Activated CD4-positive, alpha-beta T cell treated with anti-CD3 and anti-CD28 coated beads for 36 hours (primary cell): ENCODE measurements at regions of chr14 and their contacts with region 1.

Region 1: GRCh38 chr14:101947906-101948665 is 16.3 kb upstream of the DYNC1H1 start:
- DNase-seq: peak; percentile 100
- ATAC-seq: peak; percentile 98
- H3K4me3 Mint-ChIP-seq: peak overlapping the region; percentile 89
- H3K27ac Mint-ChIP-seq: peak overlapping the region; percentile 93
- H3K4me1 Mint-ChIP-seq: peaks cover 12% of the 10 kb centered on the region
- H3K27me3 Mint-ChIP-seq: peaks cover 17% of the 10 kb centered on the region

Region 2: GRCh38 chr14:101721951-101722661 is 226.0 kb before region 1 on chr14:
- CTCF ChIA-PET with region 1: no interaction called
- POLR2A ChIA-PET with region 1: no interaction called
- intact Hi-C with region 1: loop called in 1 of 2 experiments (anchors 5 kb)
- DNase-seq: peak; percentile 78
- ATAC-seq: peak; percentile 90
- H3K4me3 Mint-ChIP-seq: peak overlapping the region; percentile 74
- H3K27ac Mint-ChIP-seq: peak overlapping the region; percentile 99
- H3K4me1 Mint-ChIP-seq: peaks cover 48% of the 10 kb centered on the region
- H3K27me3 Mint-ChIP-seq: no peaks in the 10 kb centered on the region

Region 3: DNA sequence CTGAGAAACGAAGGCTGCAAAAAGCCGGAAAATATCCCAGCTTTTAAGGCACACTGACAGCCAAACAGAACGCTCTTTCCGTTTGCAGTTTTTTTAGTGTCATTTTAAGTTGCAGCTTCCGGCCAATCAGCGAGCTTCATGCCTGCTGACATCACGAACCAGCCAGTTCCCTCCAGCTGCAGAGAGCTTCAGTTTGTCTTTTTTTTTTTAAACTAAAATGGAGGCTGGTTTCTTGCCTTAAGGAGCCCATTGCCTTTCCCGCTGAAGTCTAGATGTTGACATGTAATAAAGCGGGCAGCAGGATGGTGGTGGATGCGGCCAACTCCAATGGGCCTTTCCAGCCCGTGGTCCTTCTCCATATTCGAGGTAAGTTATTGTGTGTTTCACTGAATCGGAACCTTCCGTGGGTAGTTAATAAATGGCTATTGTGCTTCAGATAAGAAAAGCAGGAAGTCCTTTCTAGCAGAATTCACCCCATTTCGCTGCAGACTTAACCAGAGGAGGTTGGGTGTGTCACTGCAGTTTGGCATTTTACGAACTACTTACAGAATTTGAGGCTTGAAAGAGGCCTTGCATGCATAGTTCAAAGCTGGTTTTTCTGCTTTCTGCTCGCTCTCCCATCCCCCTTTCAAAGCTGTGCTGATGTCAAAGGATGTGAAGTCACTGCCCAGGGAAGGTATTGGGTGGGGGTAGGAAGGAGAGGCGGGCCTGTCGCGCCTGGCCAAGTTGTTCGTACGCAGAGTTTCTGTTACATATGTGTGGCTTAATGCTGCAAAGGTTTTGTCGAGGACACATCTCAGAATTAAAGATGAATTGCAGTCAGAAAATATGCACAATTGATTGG is 138.2 kb before region 1 on chr14:
- CTCF ChIA-PET with region 1: no interaction called
- POLR2A ChIA-PET with region 1: no interaction called
- intact Hi-C with region 1: loop called (anchors 1 to 5 kb)
- DNase-seq: peak; percentile 90
- ATAC-seq: peak; percentile 86
- H3K4me3 Mint-ChIP-seq: peak overlapping the region; percentile 97
- H3K27ac Mint-ChIP-seq: peak overlapping the region; percentile 99
- H3K4me1 Mint-ChIP-seq: peaks cover 49% of the 10 kb centered on the region
- H3K27me3 Mint-ChIP-seq: no peaks in the 10 kb centered on the region

Region 4: GRCh38 chr14:101889898-101890297 is 58.2 kb before region 1 on chr14:
- CTCF ChIA-PET with region 1: no interaction called
- POLR2A ChIA-PET with region 1: interaction called, 13 read pairs
- intact Hi-C with region 1: no loop called
- DNase-seq: no peak
- ATAC-seq: no peak
- H3K4me3 Mint-ChIP-seq: no peak overlapping the region
- H3K27ac Mint-ChIP-seq: no peak overlapping the region
- H3K4me1 Mint-ChIP-seq: no peaks in the 10 kb centered on the region
- H3K27me3 Mint-ChIP-seq: no peaks in the 10 kb centered on the region

Region 5: DNA sequence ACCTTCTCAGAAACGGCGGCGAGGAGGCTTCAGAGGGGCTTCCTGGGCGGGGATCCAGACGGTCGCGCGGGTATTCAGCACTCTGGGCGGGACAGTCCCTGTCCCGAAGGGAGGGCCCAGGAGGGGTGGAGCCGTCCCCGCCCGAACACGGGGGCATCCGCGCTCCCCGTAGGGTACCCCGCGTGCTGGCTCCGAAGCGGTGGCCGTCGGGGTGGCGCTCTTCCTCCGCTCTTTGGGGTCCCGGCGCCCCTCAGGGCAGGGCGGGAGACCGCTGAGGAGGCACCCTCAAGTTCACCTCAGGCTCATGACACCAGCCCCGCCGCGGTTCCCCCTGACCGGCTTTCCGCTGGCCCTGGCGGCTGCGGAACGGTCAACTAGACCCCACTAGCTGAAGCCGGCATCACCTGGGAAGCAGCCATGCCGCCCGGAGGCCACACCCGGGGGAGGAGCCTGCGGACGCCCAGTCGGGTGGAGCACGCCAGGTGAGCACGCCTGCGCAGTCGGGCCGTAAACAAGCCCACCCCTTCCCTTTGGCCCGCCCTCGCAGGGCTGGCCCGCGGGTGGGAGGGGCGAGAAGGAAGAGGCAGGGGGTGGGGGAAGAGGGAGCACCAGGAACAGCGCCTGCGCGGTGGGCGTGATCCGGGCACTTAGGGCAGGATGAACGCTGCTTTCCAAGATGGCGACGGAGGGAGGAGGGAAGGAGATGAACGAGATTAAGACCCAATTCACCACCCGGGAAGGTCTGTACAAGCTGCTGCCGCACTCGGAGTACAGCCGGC is 191.4 kb after region 1 on chr14 and contains the start of gene WDR20:
- CTCF ChIA-PET with region 1: interaction called, 4 read pairs
- POLR2A ChIA-PET with region 1: no interaction called
- intact Hi-C with region 1: loop called (anchors 1 kb)
- DNase-seq: peak; percentile 100
- ATAC-seq: peak; percentile 94
- H3K4me3 Mint-ChIP-seq: peak within 1 kb of the TSS; percentile 96
- H3K27ac Mint-ChIP-seq: peak within 1 kb of the TSS; percentile 94
- H3K4me1 Mint-ChIP-seq: peaks cover 21% of the 10 kb centered on the region
- H3K27me3 Mint-ChIP-seq: no peaks in the 10 kb centered on the region
- total RNA-seq, gene WDR20: 18.2 to 24.8 TPM

Region 6: DNA sequence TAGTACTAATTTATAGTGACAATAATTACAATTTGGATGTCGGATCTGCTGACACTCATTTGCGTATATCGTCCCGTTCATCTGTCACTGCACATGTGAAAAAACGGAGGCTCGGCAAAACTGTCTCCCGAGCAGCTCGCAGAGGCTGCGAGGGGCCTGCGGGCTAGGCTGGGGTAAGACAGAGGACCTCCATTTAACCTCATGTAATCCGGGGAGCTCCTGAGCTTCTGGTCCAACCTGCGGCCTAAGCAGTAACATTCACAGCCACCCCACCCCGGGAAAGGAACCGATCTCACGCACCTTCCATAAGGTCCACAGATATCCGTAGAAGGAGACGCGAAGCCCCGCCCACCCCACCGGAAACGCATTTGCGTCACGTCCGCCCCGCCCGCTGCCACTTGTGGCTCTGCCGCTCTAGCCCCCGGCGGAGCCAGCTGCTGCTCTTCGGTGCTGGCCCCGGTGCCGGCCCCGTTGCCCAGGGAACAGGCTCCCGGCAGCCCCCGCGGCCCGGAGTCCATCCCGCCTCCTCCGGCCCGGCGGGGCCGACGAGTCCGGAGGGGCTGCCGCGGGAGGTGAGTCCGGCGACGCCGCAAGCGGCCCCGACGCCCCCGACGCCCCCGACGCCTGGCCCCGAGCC is 414.6 kb after region 1 on chr14 and contains the starts of genes CINP and TECPR2:
- CTCF ChIA-PET with region 1: no interaction called
- POLR2A ChIA-PET with region 1: no interaction called
- intact Hi-C with region 1: loop called in 1 of 2 experiments (anchors 1 kb)
- DNase-seq: peak; percentile 99
- ATAC-seq: peak; percentile 78
- H3K4me3 Mint-ChIP-seq: no peak within 1 kb of the TSS
- H3K27ac Mint-ChIP-seq: peak within 1 kb of the TSS; percentile 96
- H3K4me1 Mint-ChIP-seq: peaks cover 36% of the 10 kb centered on the region
- H3K27me3 Mint-ChIP-seq: no peaks in the 10 kb centered on the region
- total RNA-seq, gene CINP: 47.0 to 51.4 TPM
- total RNA-seq, gene TECPR2: 5.6 to 6.9 TPM